A549 (cell line): ENCODE measurements at regions of chr10 and their contacts with region 1.

Region 1: DNA sequence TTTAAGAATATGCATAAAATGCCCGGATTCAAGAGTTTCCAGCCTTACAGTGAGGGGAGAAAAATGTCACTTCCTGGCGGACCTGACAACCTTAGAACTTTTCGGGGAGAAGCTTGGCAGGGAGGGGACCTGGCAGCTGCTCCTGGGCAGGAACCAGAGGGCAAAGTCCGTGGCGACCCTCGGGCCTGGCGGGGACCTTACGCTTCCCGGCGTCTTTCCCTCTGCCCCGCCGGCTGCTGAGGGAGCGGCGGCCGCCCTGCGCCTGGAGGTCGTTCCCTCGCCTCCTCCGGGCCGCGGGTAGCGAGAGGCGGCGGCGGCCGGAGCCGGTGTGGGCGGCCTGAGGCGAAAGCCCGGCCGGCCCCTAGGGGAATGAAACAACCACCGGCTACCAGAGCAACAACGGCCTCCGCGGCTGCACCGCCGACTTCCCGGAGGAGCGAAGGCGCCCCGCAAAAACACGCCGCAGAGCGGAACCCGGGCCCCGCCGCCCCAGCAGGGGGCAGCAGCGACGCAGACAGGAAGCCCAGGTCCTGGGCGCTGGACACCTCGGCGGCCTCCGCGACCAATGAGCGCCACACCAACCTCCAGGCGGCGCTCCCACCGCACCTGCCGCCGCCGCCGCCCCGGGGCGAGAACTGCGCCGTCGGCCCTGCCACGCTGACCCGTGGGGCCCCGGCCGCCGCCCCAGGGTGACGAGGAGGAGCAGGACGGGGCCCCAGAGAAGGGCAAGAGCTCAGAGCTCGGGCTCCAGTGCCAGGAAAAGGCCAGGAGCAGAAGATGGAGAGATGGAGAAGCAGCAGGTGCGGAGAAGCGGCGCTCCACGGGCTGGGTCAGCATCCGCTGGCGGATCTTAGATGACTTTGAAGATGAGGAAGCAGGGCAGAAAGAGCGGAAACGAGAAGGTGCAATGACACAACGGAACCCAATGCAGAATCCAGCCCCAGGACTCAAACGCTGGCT is 10.5 kb upstream of the ACSM6 start:
- DNase-seq: peak; percentile 87 to 92
- ATAC-seq: peak; percentile 98 to 99
- H3K4me3 ChIP-seq: peak overlapping the region; percentile 57
- H3K27ac ChIP-seq: peak overlapping the region; percentile 89 to 99
- H3K4me1 ChIP-seq: peaks cover 26% of the 10 kb centered on the region
- CTCF ChIP-seq: peak; percentile 100
- EP300 ChIP-seq: no peak
- POLR2A ChIP-seq: peak; percentile 27; the same call in 1 of the 2 replicates
- RAD21 ChIP-seq: peak; percentile 79 to 98

Region 2: GRCh38 chr10:95201736-95202135 is 18.2 kb after region 1 on chr10:
- CTCF ChIA-PET with region 1: interaction called, 24 read pairs
- POLR2A ChIA-PET with region 1: no interaction called
- DNase-seq: peak; percentile 60 to 71
- ATAC-seq: peak; percentile 95 to 99
- H3K4me3 ChIP-seq: no peak overlapping the region
- H3K27ac ChIP-seq: peak overlapping the region in 1 of 2 experiments; percentile 30; a peak in 1 of 6 replicates
- H3K4me1 ChIP-seq: no peaks in the 10 kb centered on the region
- CTCF ChIP-seq: peak; percentile 52
- EP300 ChIP-seq: no peak
- POLR2A ChIP-seq: no peak
- RAD21 ChIP-seq: peak; percentile 73 to 91

Region 3: DNA sequence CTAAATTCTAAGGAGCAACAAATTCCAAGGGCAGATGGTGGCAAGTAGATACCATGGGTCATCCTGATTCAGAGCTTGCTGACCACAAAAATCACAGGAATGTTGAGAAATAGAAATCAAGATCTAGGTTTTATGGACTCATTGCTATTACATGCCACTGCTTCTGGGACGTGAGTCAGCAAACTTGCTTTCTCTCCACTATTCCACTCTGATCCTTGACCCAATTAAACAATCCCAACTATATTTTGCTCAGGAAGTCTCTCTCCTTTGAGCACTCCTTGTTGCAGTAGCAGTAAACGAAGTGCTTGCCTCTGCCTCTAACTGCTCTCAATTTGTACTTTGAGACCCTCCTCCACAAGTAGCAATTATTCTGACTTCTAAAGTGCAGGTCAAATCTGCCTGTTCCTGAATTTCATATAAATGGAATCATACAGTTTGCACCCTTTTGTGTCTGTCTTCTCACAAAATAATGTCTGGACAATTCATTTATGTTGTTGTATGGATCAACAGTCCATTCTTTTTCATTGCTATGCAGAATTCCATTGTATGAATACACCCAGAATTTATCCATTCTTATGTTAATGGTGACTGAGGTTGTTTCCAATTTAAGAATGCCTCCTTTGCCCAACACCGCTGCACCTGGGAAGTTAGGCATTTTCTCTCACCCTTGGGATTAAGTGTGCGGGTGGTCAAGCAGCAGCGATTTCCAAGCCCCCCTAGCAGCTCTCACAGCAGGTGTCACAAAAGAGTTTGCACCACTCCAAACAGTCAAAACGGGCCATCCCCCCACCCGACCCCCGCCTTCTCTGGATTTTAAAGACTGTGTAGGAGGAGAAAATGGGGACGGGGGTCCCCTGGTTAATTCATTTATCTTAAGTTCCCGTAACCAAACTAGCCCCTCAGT is 46.4 kb after region 1 on chr10:
- CTCF ChIA-PET with region 1: interaction called, 16 read pairs
- POLR2A ChIA-PET with region 1: no interaction called
- DNase-seq: peak; percentile 60 to 91
- ATAC-seq: peak; percentile 96 to 97
- H3K4me3 ChIP-seq: no peak overlapping the region; the same call in 2 of the 3 replicates
- H3K27ac ChIP-seq: peak overlapping the region; percentile 93
- H3K4me1 ChIP-seq: peaks cover 39% of the 10 kb centered on the region
- CTCF ChIP-seq: no peak
- EP300 ChIP-seq: peak; percentile 56 to 80; a peak in 3 of 5 replicates
- POLR2A ChIP-seq: no peak
- RAD21 ChIP-seq: peak; percentile 3 to 26; a peak in 1 of 5 replicates

Region 4: DNA sequence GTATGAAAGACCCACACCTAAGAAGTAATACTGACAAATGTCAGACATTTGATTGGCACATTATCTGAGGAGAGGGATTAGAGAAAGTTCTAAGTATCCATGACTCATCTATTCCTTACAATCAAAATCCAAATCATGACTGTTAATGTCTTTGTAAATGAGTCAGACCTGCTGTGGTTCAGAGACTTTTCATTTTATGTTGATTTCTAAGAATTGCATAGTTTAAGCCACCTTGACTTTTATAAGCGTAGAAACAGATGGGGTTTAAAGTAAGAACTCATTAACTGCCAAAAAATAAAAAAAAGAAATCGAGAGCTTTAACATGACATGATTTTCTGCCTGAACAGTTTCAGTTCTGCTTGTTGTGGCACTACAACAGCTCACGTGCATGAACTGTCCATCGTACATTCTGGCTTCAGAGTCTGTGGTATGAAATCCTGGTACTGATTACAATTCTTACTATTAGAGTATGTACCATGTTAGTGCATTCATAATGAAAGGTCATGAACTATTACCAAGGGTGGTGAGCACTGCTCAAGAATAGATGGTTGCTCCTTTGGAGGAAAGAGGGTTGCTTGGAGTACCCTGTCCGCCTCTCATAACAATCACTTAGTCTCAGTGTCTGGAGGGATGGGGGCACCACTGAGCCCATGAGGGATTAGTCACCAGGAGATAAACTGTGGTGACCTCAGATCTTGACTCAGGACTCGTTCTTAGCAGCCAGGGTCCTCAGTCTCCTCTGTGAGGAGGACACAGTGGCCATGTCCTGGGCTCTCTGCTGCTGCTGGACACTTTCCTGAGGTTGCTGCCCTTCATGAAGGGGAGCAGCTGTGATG is 52.7 kb after region 1 on chr10:
- CTCF ChIA-PET with region 1: interaction called, 151 read pairs
- POLR2A ChIA-PET with region 1: no interaction called
- DNase-seq: no peak
- ATAC-seq: peak; percentile 55 to 56; a peak in 4 of 6 replicates
- H3K4me3 ChIP-seq: no peak overlapping the region
- H3K27ac ChIP-seq: peak overlapping the region; percentile 63 to 85
- H3K4me1 ChIP-seq: peaks cover 34% of the 10 kb centered on the region
- CTCF ChIP-seq: no peak
- EP300 ChIP-seq: no peak
- POLR2A ChIP-seq: no peak
- RAD21 ChIP-seq: no peak

Region 5: GRCh38 chr10:95467162-95467599 is 283.6 kb after region 1 on chr10:
- CTCF ChIA-PET with region 1: no interaction called
- POLR2A ChIA-PET with region 1: no interaction called
- DNase-seq: no peak
- ATAC-seq: peak in 1 of 2 experiments; percentile 47; a peak in 2 of 6 replicates
- H3K4me3 ChIP-seq: no peak overlapping the region
- H3K27ac ChIP-seq: no peak overlapping the region
- H3K4me1 ChIP-seq: no peaks in the 10 kb centered on the region
- CTCF ChIP-seq: no peak
- EP300 ChIP-seq: no peak
- POLR2A ChIP-seq: no peak
- RAD21 ChIP-seq: no peak